Left colon (tissue), 2 donors: ENCODE measurements at regions of chr6 and their contacts with region 1.

Region 1: GRCh38 chr6:56370561-56371211 is 123.3 kb upstream of the COL21A1 start:
- DNase-seq: no peak
- ATAC-seq: peak; percentile 60

Region 2: DNA sequence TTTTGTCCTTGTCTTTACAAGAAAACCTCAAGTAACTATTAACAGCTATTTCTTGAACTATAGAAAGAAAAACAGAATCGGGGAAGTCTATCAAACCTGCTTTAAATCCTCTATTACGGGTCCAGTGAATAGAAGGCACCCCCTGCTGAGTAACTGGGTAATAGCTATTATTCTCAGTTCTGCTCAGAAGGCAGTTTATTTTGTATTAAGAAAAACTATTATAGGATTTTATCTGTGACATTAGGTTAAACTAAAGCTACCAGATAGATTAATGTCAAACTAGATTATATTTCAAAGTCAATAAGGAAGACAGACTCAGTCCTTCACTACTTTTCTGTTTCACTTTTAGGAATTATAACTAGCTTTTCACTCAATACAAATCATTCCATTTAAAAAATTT is 178.3 kb after region 1 on chr6:
- intact Hi-C with region 1: loop called in 1 of 2 experiments (anchors 5 kb)
- DNase-seq: no peak
- ATAC-seq: peak; percentile 29

Region 3: DNA sequence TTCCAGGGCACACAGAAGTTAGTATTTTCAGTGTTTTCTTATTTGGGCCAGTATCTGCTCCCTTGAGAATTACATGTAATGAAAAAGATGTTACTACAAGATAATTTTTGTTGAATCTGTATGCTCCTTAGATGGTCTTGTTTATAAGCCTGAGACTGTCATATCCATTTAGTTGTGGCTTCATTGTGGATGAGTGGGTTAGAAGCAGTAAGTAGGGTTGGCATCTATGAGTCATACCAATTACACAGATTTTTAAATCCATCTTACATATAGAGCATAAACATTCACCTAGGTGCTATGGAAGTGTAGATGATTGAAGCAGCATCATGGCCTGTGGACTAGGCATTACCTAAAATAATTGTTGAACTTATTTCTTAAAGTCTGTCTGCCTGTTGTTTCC is 788.0 kb after region 1 on chr6:
- intact Hi-C with region 1: no loop called
- DNase-seq: no peak
- ATAC-seq: no peak